Activated CD8-positive, alpha-beta T cell treated with anti-CD3 and anti-CD28 coated beads for 36 hours (primary cell): ENCODE measurements at regions of chr22 and their contacts with region 1.

Region 1: GRCh38 chr22:38201710-38202436 is at the start of gene MAFF:
- DNase-seq: peak; percentile 97
- ATAC-seq: peak; percentile 78
- H3K4me3 Mint-ChIP-seq: peak within 1 kb of the TSS; percentile 82
- H3K27ac Mint-ChIP-seq: peak within 1 kb of the TSS; percentile 93
- H3K4me1 Mint-ChIP-seq: peaks cover 37% of the 10 kb centered on the region
- H3K27me3 Mint-ChIP-seq: no peaks in the 10 kb centered on the region
- CTCF ChIP-seq: no peak
- total RNA-seq, gene MAFF: 12.5 to 13.7 TPM

Region 2: GRCh38 chr22:38181453-38182247 is 20.2 kb before region 1 on chr22 and contains the start of gene PLA2G6:
- CTCF ChIA-PET with region 1: interaction called, 11 read pairs
- POLR2A ChIA-PET with region 1: interaction called, 21 read pairs
- intact Hi-C with region 1: no loop called
- DNase-seq: peak; percentile 99
- ATAC-seq: peak; percentile 96
- H3K4me3 Mint-ChIP-seq: peak within 1 kb of the TSS; percentile 94
- H3K27ac Mint-ChIP-seq: peak within 1 kb of the TSS; percentile 97
- H3K4me1 Mint-ChIP-seq: peaks cover 41% of the 10 kb centered on the region
- H3K27me3 Mint-ChIP-seq: no peaks in the 10 kb centered on the region
- CTCF ChIP-seq: no peak
- total RNA-seq, gene PLA2G6: 52.4 to 53.6 TPM